Breast epithelium (tissue), 4 donors: ENCODE measurements at regions of chr19 and their contacts with region 1.

Region 1: DNA sequence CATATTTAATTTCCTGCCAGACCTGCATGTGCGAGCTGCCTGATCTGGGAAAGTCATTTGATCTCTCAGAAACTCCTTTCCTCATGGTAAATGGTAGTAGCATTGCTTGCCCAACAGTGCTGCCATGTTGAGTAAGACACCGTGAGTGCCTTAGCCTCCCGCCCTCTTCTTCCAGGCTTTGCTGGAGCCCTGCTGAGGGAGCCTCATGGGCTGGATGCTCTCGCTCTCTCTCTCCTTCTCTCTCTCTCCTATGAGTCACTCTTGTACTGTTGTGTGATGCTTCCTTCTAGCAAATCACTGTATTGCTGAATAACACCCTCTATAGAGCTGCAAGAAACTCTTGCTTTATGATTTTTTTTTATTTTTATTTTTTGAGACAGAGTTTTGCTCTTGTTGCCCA is 365.5 kb downstream of the UQCRFS1 start:
- DNase-seq: no peak
- H3K4me3 ChIP-seq: no peak overlapping the region
- H3K27ac ChIP-seq: no peak overlapping the region
- H3K4me1 ChIP-seq: no peaks in the 10 kb centered on the region
- H3K27me3 ChIP-seq: peaks cover 0 to 7% of the 10 kb centered on the region in 2 donors
- CTCF ChIP-seq: no peak
- POLR2A ChIP-seq: no peak

Region 2: GRCh38 chr19:30441011-30441410 is 1593.5 kb after region 1 on chr19:
- intact Hi-C with region 1: loop called (anchors 5 kb)
- DNase-seq: no peak
- H3K4me3 ChIP-seq: no peak overlapping the region
- H3K27ac ChIP-seq: no peak overlapping the region
- H3K4me1 ChIP-seq: no peaks in the 10 kb centered on the region
- H3K27me3 ChIP-seq: peaks cover 0 to 5% of the 10 kb centered on the region in 2 donors
- CTCF ChIP-seq: no peak
- POLR2A ChIP-seq: no peak